Right cardiac atrium (tissue), 5 donors: ENCODE measurements at regions of chr3 and their contacts with region 1.

Region 1: GRCh38 chr3:124281453-124282316 is 289.8 kb upstream of the ROPN1 start:
- DNase-seq: no peak
- ATAC-seq: peak; percentile 65 to 70
- H3K4me3 ChIP-seq: no peak overlapping the region
- H3K27ac ChIP-seq: no peak overlapping the region
- H3K4me1 ChIP-seq: peaks cover 6% of the 10 kb centered on the region
- H3K27me3 ChIP-seq: no peaks in the 10 kb centered on the region

Region 2: DNA sequence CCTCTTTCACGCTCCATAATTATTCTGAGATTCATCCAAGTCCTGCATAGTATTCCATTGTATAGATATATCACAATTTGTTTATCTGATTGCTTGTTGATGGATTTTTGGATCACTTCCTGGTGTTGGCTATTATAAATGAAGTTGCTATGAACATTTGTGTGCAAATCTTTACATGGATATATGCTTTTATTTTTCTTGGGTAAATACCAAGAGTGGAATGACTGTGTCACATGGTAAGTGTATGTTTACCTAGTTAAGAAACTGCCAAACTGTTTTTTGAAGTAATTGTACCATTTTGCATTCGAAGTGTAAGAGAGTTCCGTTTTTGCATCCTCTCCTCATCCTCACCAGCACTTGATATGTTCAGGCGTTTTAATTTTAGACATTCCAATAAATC is 255.2 kb before region 1 on chr3:
- intact Hi-C with region 1: loop called in 2 of 4 experiments (anchors 5 to 10 kb)
- DNase-seq: no peak
- ATAC-seq: no peak
- H3K4me3 ChIP-seq: no peak overlapping the region
- H3K27ac ChIP-seq: no peak overlapping the region
- H3K4me1 ChIP-seq: no peaks in the 10 kb centered on the region
- H3K27me3 ChIP-seq: no peaks in the 10 kb centered on the region

Region 3: DNA sequence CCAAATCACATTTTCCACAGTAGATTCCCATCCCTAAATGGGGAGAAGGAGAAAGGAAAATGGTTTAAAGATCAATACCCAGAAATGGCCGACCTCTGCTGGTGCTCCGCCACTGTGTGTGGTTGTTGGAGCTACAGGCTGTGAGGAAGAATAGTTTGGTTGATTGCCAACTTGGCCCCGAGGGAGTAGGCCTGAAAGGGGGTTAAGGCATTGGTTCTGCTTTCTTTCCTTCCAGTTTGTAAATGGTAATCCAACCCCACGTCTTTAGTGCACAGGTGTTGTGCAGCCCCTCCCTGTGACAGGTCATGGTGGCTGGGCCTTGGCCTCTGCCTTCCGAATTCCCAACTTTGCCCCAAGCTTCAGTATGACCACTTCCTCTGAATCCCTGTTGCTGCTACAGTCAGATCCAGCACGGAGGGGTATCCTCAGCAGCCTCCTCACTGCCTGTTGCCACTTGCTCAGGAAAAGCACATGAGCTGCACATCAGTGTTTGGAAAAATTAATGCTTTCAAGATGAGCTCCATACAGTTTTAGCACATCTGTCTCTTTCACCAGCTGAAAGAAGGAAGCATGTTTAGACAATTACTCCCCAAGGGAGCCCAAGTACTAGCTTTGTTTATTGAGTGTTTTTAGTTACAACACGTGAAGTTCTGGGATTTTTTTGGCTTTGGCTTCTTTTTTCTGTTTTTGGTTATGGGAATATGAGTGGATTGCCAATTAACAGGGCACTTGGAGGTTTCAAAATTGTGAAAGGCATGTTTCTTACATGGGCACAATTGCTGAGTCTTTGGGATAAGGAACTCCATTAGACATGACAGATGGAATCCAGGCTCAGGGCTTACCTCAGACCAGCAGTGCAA is 197.4 kb before region 1 on chr3:
- intact Hi-C with region 1: loop called in 1 of 4 experiments (anchors 10 kb)
- DNase-seq: no peak
- ATAC-seq: peak in 1 of 2 donors; percentile 31
- H3K4me3 ChIP-seq: no peak overlapping the region
- H3K27ac ChIP-seq: no peak overlapping the region
- H3K4me1 ChIP-seq: peaks cover 8% of the 10 kb centered on the region
- H3K27me3 ChIP-seq: no peaks in the 10 kb centered on the region

Region 4: GRCh38 chr3:125611908-125612307 is 1330.2 kb after region 1 on chr3:
- intact Hi-C with region 1: no loop called
- DNase-seq: no peak
- ATAC-seq: no peak
- H3K4me3 ChIP-seq: no peak overlapping the region
- H3K27ac ChIP-seq: no peak overlapping the region
- H3K4me1 ChIP-seq: no peaks in the 10 kb centered on the region
- H3K27me3 ChIP-seq: no peaks in the 10 kb centered on the region